CD14-positive monocyte (primary cell): ENCODE measurements at regions of chr17 and their contacts with region 1.

Region 1: DNA sequence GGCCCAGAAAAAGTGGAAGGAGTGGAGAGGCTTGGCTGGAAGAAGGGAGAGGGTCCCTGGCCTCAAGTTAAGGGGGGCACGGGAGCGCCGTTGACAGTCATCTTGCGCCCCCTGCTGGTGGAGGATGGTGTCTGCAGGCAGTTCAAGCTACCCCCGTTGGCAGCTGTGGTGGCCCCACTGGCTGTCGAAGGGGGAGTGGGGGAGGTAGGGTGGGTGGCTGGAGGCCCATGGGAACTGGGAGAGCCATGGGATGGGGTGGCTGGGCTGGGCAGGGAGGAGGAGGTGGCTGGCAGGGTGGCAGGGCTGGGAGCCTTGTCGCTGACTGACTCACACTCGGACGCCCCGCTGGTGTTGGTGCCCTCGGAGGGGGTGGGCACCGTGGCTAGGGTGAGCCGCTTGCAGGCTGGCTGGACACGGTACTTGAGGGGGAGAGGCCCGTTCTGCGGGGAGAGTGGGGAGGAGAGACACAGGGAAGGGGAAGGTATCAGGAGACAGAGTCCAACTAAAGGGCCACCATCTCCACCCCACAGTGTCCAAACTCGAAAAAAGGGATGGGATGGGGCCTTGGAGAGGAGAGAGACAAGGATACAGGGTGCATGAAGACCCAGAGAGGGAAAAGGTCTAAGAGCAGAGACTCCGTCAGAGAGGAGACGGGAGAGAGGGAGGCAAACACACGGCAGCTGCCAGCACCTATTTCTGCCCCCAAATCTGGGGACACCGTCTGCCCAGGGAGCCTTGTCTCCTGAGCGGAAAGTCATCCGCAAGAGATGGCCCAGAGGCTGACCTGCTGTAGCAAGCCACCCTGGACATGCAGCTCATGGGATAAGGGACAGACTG is 5.2 kb downstream of the CISD3 start:
- DNase-seq: peak; percentile 35 to 57 (median 51)
- H3K4me3 ChIP-seq: no peak overlapping the region
- H3K4me3 Mint-ChIP-seq: no peak overlapping the region
- H3K27ac ChIP-seq: no peak overlapping the region
- H3K27ac Mint-ChIP-seq: no peak overlapping the region
- H3K4me1 ChIP-seq: peaks cover 20 to 21% of the 10 kb centered on the region in 2 donors
- H3K4me1 Mint-ChIP-seq: peaks cover 25% of the 10 kb centered on the region
- H3K27me3 ChIP-seq: peaks cover 0 to 4% of the 10 kb centered on the region in 2 donors
- H3K27me3 Mint-ChIP-seq: peaks cover 13 to 23% (median 21%) of the 10 kb centered on the region in 3 donors
- CTCF ChIP-seq: peak; percentile 94

Region 2: GRCh38 chr17:38674749-38675615 is 60.4 kb before region 1 on chr17 and contains the start of gene EPOP:
- intact Hi-C with region 1: loop called (anchors 2 kb)
- DNase-seq: peak; percentile 73 to 84 (median 75)
- H3K4me3 ChIP-seq: peak within 1 kb of the TSS in 2 of 3 experiments; percentile 23 to 73
- H3K4me3 Mint-ChIP-seq: peak within 1 kb of the TSS; percentile 28 to 82
- H3K27ac ChIP-seq: no peak within 1 kb of the TSS
- H3K27ac Mint-ChIP-seq: peak within 1 kb of the TSS in 1 of 7 donors; percentile 83
- H3K4me1 ChIP-seq: peaks cover 16 to 30% of the 10 kb centered on the region in 2 donors
- H3K4me1 Mint-ChIP-seq: peaks cover 32% of the 10 kb centered on the region
- H3K27me3 ChIP-seq: peaks cover 52 to 55% of the 10 kb centered on the region in 2 donors
- H3K27me3 Mint-ChIP-seq: peaks cover 54 to 76% (median 76%) of the 10 kb centered on the region in 3 donors
- CTCF ChIP-seq: no peak
- polyA plus RNA-seq, gene EPOP: 0.63 TPM in 1 of 3 donors, not detected in the others